Activated CD8-positive, alpha-beta T cell treated with anti-CD3 and anti-CD28 coated beads, Interleukin-2, amount 10 ng/mL, durations not matched to agents 7 days and 5 days (primary cell): ENCODE measurements at regions of chr5 and their contacts with region 1.

Region 1: DNA sequence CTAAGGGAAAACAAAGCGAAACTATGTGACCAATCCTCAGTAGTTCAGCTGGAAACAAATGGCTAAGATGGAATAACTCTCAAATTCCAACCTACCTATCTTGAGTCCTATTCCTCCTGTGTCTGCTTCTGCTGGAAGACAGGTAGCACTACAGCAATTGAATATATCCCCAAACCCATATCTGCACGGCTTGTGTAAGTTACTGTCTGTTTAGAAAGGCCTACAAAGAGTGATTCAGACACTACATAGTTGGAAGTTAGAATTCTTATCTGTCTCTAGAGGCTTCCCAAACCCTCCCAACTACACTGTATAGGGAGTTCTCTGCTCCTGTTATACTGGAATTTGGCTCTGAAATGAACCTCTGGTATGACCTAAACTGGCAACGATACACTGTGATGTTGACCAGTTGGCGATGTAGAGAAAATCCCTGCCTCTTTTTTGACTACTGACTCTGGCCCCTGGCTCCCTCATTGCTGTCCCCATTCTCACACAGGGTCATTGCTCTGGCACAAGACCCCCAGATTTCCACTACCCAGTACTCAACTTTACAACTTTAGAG is 22.6 kb upstream of the NADK2 start:
- DNase-seq: no peak
- ATAC-seq: no peak
- H3K4me3 Mint-ChIP-seq: no peak overlapping the region
- H3K27ac Mint-ChIP-seq: no peak overlapping the region
- H3K4me1 Mint-ChIP-seq: no peaks in the 10 kb centered on the region
- H3K27me3 Mint-ChIP-seq: peaks cover 12% of the 10 kb centered on the region

Region 2: GRCh38 chr5:36252722-36253365 is 11.4 kb before region 1 on chr5:
- CTCF ChIA-PET with region 1: interaction called, 13 read pairs
- POLR2A ChIA-PET with region 1: no interaction called
- DNase-seq: no peak
- ATAC-seq: no peak
- H3K4me3 Mint-ChIP-seq: no peak overlapping the region
- H3K27ac Mint-ChIP-seq: no peak overlapping the region
- H3K4me1 Mint-ChIP-seq: no peaks in the 10 kb centered on the region
- H3K27me3 Mint-ChIP-seq: peaks cover 22% of the 10 kb centered on the region

Region 3: DNA sequence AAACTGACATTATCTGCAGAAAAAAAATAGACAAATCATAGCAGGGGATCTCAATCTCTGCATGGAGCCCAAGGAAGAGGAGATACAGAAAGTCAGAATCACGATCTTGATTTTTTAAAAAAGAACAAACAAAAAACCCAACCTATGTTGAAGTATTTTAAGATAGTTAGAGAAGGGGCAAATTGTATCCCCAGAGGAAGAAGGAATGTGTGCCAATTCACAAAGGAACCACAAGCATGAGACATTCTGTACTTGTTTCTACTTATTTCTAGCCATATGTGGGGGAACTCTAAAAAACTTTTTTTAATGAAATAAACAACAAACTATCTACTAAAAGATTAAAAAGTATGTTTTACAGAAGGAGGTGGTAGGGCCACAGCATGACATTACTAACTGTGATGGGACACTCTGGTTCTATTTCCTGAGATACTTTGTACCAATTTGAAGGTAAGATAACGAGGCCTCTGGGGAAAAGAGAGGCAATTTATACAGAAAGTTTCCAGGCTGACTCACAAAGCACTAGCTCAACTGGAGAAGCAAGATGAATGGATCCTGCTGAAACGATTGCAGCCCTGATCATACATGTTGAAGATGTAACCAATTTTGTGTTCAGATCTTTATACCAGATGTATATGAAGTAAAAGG is 14.9 kb after region 1 on chr5:
- CTCF ChIA-PET with region 1: interaction called, 11 read pairs
- POLR2A ChIA-PET with region 1: no interaction called
- DNase-seq: no peak
- ATAC-seq: no peak
- H3K4me3 Mint-ChIP-seq: no peak overlapping the region
- H3K27ac Mint-ChIP-seq: no peak overlapping the region
- H3K4me1 Mint-ChIP-seq: no peaks in the 10 kb centered on the region
- H3K27me3 Mint-ChIP-seq: peaks cover 15% of the 10 kb centered on the region